ENCODE measurements at regions of chr12 and their contacts with region 1.

Region 1: GRCh38 chr12:11202811-11203210 is 16.1 kb upstream of the TAS2R42 start:
- DNase-seq: no peak
- ATAC-seq: no peak

Region 2: DNA sequence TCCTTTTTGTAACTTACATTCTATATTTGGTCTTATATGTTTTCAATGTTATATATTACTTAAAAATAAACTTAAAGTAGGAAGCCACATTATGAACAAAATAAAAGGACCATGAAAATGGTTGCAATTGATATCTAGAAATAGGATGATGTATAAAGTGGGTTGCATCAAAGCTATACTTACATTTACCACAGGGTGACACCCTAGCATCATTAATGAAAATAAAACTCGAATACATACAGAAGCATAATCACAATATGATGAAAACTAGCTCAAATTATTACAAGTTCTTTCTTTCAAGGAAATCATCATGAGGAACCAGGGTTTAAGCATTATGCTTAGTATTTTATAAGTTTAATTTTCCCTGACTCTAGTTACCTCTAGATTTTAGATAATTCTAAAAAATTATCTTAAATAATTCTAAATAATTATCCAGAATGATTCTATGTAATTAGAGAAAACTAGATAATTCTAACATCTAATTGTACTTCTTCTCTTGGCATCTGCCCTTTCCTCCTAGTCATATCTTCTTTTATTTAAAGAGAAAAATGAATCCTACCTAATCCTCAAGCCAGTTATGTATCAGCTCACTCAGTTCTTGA is 431.6 kb before region 1 on chr12:
- intact Hi-C with region 1: loop called (anchors 5 kb)
- DNase-seq: no peak
- ATAC-seq: peak; percentile 53

Measured in Right ventricle myocardium superior (tissue), 1 donor.